ENCODE measurements at regions of chr1 and their contacts with region 1.

Region 1: GRCh38 chr1:224459966-224460365 is 25.4 kb upstream of the WDR26 start:
- DNase-seq: no peak
- H3K4me3 ChIP-seq: no peak overlapping the region
- H3K27ac ChIP-seq: peak overlapping the region in 1 of 5 donors; percentile 59
- H3K4me1 ChIP-seq: peaks cover 7 to 15% of the 10 kb centered on the region in 2 donors
- H3K27me3 ChIP-seq: no peaks in the 10 kb centered on the region
- CTCF ChIP-seq: no peak
- POLR2A ChIP-seq: no peak

Region 2: DNA sequence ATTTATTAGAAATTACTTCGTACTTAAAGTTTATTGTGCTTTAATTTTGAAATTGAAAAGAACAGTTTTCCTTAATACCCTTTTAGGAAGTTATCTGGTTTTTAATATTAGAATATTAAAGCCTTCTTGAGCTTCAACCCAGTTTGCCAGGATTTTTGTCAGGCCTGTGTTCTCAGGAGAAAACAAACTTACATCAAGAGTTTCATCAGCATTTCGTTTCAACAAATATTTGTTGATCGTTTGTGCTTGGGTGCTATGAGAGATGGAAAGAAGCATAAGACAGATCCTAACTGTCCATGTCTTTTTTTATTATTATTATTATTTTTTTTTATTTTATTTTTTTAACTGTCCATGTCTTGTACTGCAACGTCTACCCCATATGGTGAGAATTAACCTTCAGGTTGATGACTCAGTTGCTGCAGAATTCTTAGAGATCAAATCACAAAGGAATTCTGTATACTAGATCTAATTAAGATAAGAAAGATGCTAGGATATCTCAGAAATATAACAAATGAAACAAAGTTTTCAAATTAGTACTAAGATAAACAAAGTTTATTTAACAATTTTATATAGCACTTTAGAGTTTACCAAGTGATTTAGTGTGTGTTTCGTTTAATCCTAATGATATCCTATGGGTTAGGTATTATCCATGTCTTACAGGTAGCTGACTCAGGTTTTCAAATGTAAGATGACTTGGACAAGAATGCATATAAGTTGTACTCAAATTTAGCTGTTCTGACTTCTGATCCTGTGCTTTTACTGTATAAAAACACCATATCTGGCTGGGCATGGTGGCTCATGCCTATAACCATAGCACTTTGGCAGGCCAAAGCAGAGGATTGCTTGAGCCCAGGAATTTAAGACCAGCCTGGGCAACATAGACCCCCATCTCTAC is 331.8 kb before region 1 on chr1:
- intact Hi-C with region 1: loop called in 1 of 2 experiments (anchors 10 kb)
- DNase-seq: no peak
- H3K4me3 ChIP-seq: no peak overlapping the region
- H3K27ac ChIP-seq: no peak overlapping the region
- H3K4me1 ChIP-seq: peaks cover 0 to 6% of the 10 kb centered on the region in 2 donors
- H3K27me3 ChIP-seq: no peaks in the 10 kb centered on the region
- CTCF ChIP-seq: no peak
- POLR2A ChIP-seq: no peak

Region 3: GRCh38 chr1:224528900-224529299 is 68.9 kb after region 1 on chr1:
- intact Hi-C with region 1: no loop called
- DNase-seq: no peak
- H3K4me3 ChIP-seq: no peak overlapping the region
- H3K27ac ChIP-seq: no peak overlapping the region
- H3K4me1 ChIP-seq: no peaks in the 10 kb centered on the region
- H3K27me3 ChIP-seq: no peaks in the 10 kb centered on the region
- CTCF ChIP-seq: no peak
- POLR2A ChIP-seq: no peak